ENCODE measurements at regions of chr9 and their contacts with region 1.

Region 1: DNA sequence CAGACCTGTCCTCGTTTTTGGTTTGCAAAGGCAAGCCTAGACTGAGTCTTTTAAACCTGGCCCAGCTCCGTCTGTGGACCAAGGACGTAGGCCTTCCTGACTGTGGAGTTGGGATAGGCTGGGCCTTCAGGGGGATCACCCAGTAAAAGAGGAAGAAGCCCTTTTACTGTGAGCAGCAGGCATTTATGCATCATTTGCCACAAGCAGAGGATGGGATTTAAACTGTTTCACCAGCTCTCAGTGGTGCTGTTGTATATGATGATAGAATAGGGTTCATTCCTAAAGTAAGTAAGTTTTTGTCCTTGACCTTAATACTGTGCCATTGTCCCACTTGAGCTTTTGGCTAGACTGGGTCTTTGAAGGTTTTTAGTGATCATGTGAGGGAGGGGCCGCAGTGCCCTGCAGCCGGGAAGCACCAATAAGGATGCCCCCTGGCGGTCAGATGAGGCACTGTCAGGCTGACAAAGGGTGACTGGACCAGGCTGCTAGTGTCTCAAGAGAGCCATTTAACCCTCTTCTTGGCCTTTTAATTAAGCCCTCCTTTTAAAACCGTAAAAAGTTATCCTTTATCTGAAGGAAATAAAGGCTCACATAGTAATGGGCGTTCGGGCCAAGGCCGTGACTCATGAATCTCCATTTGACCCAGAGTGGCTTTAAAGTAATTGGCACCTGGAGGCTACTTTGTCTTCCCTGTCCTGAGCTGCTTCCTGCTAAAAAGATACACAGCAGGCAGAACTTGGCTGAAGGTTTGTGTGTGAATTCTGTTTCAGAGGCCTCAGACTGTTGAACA is 74.0 kb downstream of the UBAP1 start:
- DNase-seq: peak; percentile 68 to 77
- ATAC-seq: peak; percentile 32 to 53 (median 47)
- H3K4me3 ChIP-seq: no peak overlapping the region
- H3K27ac ChIP-seq: peak overlapping the region; percentile 90
- H3K4me1 ChIP-seq: peaks cover 58% of the 10 kb centered on the region
- H3K27me3 ChIP-seq: no peaks in the 10 kb centered on the region
- CTCF ChIP-seq: peak; percentile 85

Region 2: DNA sequence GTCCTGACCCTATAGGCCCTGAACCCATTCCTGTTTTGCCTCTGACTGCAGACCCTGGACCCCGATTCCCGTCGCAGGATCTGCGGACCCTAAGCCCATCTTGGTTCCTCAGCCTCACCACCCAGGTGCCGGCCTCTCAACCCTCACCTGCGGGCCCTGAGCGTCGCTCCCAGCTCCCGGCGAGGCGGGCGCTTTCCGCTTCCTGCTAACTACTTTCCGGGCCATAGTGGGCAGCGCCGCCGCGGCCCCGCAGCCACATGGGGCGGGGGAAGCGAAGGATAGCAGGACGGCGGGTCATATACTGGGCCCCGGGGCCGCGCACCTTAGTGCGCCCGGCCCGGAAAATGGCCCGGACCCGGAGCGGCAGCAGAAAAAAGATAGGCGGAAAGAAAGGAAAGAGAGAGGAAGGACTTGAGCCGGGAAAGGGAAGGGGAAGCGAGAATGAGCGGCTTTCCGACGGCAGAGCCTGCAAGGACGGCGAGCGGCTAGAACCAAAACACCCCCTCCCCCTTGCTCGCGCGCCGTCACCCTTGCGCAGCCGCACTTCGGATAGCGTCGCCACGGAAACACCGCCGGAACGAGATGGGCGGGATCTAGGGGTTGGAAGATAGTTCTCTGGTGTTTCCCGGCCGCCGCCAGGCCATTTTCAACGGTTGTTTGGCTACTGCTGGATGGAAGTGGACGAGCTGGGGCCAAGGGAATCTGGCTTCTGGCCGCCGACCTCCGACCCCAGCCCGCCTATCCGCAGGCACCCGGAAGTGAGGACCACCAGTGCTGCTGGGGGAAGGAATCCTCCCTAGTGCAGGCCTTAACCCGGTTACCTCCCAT is 126.4 kb before region 1 on chr9 and contains the start of gene DCAF12:
- intact Hi-C with region 1: loop called (anchors 5 kb)
- DNase-seq: peak; percentile 92 to 96
- ATAC-seq: peak; percentile 98 to 99 (median 98)
- H3K4me3 ChIP-seq: peak within 1 kb of the TSS; percentile 83
- H3K27ac ChIP-seq: peak within 1 kb of the TSS; percentile 97
- H3K4me1 ChIP-seq: peaks cover 31% of the 10 kb centered on the region
- H3K27me3 ChIP-seq: no peaks in the 10 kb centered on the region
- CTCF ChIP-seq: peak; percentile 15
- total RNA-seq, gene DCAF12: 18.0 to 27.1 (median 23.3) TPM

Region 3: GRCh38 chr9:34154057-34154456 is 98.8 kb before region 1 on chr9:
- intact Hi-C with region 1: no loop called
- DNase-seq: no peak
- ATAC-seq: peak in 2 of 4 donors; percentile 77 to 82
- H3K4me3 ChIP-seq: no peak overlapping the region
- H3K27ac ChIP-seq: peak overlapping the region; percentile 57
- H3K4me1 ChIP-seq: peaks cover 14% of the 10 kb centered on the region
- H3K27me3 ChIP-seq: no peaks in the 10 kb centered on the region
- CTCF ChIP-seq: no peak

Region 4: GRCh38 chr9:34178520-34179212 is 74.2 kb before region 1 on chr9 and contains the start of gene UBAP1:
- intact Hi-C with region 1: loop called (anchors 5 kb)
- DNase-seq: peak; percentile 96 to 98
- ATAC-seq: peak; percentile 97 to 100 (median 99)
- H3K4me3 ChIP-seq: peak within 1 kb of the TSS; percentile 78
- H3K27ac ChIP-seq: peak within 1 kb of the TSS; percentile 83
- H3K4me1 ChIP-seq: peaks cover 4% of the 10 kb centered on the region
- H3K27me3 ChIP-seq: no peaks in the 10 kb centered on the region
- CTCF ChIP-seq: no peak
- total RNA-seq, gene UBAP1: 55.8 to 126 (median 73.4) TPM

Region 5: DNA sequence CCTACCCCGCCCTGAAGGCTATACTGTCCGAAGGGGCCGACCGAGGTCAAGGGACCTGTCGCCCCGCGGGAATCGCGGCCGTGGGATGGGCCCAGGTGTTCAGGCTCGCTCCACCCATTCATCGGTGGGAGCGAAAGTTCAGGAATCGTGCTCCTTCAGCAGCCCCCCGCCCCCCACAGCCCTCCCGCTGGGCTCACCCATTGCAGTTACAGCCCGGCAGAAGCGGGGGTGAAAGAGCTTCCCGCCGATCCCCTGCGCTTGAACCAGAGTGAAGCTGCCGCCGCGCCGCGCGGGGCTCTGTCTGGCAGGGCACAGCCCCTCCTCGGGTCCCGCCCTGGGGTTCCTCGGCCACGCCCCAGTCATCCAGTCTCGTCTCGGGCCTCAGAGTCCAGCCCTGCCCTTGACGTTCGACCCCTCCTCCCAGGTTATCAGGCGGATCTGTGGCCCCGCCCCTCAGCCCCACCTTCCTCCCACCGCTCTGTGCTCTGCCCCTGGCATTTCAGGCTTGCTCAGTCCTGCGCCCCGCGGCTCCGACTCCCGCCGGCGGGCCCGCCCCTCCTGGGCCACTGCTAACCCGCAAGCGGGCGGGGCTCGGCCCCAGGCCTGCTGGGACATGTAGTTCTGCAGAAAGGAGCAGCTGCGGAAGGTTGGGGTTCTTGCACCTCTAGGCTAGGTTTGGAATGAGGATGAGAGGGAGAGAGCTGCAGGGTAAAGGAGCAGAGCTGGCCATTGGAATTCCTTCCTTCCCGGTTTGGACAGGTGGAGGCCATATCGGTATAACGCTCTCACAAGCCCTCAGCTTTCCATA is 123.9 kb after region 1 on chr9 and contains the start of gene MYORG:
- intact Hi-C with region 1: loop called (anchors 5 kb)
- DNase-seq: peak; percentile 94 to 98
- ATAC-seq: peak; percentile 82 to 88 (median 86)
- H3K4me3 ChIP-seq: peak within 1 kb of the TSS; percentile 71
- H3K27ac ChIP-seq: peak within 1 kb of the TSS; percentile 78
- H3K4me1 ChIP-seq: peaks cover 29% of the 10 kb centered on the region
- H3K27me3 ChIP-seq: no peaks in the 10 kb centered on the region
- CTCF ChIP-seq: no peak
- total RNA-seq, gene MYORG: 16.3 to 34.1 (median 25.1) TPM

Measured in psoas muscle (tissue), 8 donors.